Esophagus squamous epithelium (tissue), 5 donors: ENCODE measurements at regions of chr11 and their contacts with region 1.

Region 1: DNA sequence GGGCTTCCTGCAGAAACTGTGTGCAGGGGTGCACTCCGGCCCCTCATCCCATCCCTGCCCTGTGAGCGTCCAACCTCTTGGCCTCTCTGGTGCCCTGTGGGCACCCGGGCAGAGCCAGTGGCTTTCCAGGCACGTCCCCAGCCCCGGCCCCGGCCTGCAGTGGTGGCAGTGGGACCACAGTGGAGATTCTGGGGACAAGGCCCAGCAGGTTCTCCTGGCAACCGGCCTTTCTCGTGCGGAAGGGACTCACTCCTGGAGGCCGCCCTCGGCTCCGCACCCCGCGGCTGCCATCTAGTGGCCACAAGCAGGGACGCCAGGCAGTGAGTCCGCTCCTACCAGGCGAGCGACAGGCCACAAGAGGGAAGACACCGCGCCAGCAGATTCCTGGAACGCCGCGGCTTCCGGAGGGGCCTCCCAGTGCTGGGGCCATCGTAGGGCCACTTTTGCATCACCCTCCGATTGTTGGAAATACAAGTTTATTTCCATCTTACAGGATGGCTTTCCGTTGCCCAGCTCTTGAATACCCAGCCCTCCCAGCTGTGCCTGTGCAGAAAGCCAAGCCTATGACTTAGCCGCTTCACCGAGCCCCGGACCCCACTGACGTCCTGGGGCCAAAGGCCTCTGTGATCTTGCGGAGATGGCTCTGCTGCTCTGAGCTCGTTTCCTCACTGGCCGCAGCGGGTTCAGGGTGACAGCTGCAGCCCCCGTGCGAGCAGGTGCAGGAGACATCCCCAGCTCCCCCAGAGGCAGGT is 357.3 kb downstream of the CTTN start:
- DNase-seq: no peak
- H3K4me3 ChIP-seq: peak overlapping the region in 1 of 4 donors; percentile 18
- H3K27ac ChIP-seq: no peak overlapping the region
- H3K4me1 ChIP-seq: peaks cover 0 to 7% (median 6%) of the 10 kb centered on the region in 3 donors
- H3K27me3 ChIP-seq: peaks cover 0 to 29% (median 0%) of the 10 kb centered on the region in 4 donors
- CTCF ChIP-seq: peak; percentile 73 to 96 (median 92)
- POLR2A ChIP-seq: no peak

Region 2: GRCh38 chr11:70471254-70471653 is 284.3 kb before region 1 on chr11:
- intact Hi-C with region 1: loop called (anchors 5 kb)
- DNase-seq: no peak
- H3K4me3 ChIP-seq: no peak overlapping the region
- H3K27ac ChIP-seq: no peak overlapping the region
- H3K4me1 ChIP-seq: no peaks in the 10 kb centered on the region
- H3K27me3 ChIP-seq: peaks cover 0 to 11% (median 0%) of the 10 kb centered on the region in 4 donors
- CTCF ChIP-seq: peak in 1 of 6 experiments; percentile 22
- POLR2A ChIP-seq: no peak

Region 3: DNA sequence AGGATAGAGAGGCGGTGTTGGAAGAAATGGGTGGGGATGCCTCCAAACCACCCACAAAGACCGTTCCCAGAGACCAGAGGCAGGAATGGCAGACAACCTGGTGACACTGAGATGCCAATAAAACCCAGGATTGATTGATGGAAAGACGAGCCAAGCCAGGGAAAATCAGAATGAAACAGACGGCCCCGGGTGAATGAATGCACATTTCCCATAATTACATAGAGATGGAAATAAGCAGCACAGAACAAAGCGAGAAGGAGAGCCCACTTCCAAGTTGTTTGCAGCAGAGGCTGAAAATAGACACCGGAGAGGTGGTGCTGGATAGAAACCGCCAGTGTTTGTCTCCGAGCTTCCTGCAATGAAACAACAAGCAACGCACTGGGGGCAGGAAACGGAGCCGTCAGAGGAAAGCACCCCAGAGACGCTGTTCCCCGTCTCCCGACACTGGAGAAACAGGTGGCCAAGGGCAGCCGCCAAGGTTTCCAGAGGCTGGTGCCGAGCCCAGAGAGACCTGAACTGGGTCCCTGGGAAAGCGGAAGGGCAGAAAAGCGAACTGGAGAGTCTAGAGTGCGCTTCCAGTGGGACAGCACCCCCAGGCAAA is 90.0 kb after region 1 on chr11:
- intact Hi-C with region 1: no loop called
- DNase-seq: no peak
- H3K4me3 ChIP-seq: no peak overlapping the region
- H3K27ac ChIP-seq: no peak overlapping the region
- H3K4me1 ChIP-seq: no peaks in the 10 kb centered on the region
- H3K27me3 ChIP-seq: no peaks in the 10 kb centered on the region
- CTCF ChIP-seq: no peak
- POLR2A ChIP-seq: no peak